ENCODE measurements at regions of chr1 and their contacts with region 1.

Region 1: GRCh38 chr1:160085686-160086455 is 4.5 kb downstream of the KCNJ9 start:
- DNase-seq: peak; percentile 82
- H3K4me3 Mint-ChIP-seq: no peak overlapping the region
- H3K27ac Mint-ChIP-seq: no peak overlapping the region
- H3K4me1 Mint-ChIP-seq: peaks cover 5% of the 10 kb centered on the region
- H3K27me3 Mint-ChIP-seq: peaks cover 24% of the 10 kb centered on the region
- CTCF ChIP-seq: peak; percentile 96

Region 2: DNA sequence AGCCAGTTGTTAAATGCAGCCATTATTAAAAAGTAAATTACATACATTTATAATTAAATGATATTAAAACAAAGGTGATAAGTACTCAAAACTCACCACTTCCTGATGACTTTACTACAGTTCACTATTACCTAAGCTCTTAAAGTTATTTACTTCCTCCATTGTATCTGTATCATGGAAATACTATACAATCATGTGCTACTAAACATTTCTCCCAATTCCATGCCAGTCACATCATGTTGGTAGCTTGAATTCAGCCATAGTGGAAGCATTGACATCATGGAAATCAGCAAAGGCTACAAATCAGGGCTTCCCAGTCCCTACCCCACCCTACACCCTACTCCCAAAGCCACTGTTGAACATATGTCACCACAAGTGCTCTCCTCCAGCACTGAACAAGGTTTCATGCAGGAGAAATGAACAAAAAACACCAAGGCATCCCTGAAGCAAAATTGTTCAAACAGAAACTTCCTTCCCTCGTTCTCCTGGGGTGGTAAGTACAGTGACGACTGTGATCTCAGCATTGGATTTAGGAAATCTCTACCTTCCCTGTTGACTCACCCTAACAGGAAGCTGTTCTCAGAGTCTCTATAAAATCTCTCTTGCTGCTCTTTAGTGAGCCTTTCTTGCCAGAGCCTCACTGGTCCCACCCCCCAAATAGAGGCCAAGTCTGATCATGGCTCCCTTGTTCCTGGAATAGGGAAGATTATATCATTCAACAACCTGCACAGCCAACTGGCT is 236.1 kb before region 1 on chr1:
- CTCF ChIA-PET with region 1: no interaction called
- POLR2A ChIA-PET with region 1: no interaction called
- intact Hi-C with region 1: no loop called
- DNase-seq: peak; percentile 75
- H3K4me3 Mint-ChIP-seq: peak overlapping the region; percentile 49
- H3K27ac Mint-ChIP-seq: peak overlapping the region; percentile 74
- H3K4me1 Mint-ChIP-seq: peaks cover 41% of the 10 kb centered on the region
- H3K27me3 Mint-ChIP-seq: no peaks in the 10 kb centered on the region
- CTCF ChIP-seq: no peak

Region 3: DNA sequence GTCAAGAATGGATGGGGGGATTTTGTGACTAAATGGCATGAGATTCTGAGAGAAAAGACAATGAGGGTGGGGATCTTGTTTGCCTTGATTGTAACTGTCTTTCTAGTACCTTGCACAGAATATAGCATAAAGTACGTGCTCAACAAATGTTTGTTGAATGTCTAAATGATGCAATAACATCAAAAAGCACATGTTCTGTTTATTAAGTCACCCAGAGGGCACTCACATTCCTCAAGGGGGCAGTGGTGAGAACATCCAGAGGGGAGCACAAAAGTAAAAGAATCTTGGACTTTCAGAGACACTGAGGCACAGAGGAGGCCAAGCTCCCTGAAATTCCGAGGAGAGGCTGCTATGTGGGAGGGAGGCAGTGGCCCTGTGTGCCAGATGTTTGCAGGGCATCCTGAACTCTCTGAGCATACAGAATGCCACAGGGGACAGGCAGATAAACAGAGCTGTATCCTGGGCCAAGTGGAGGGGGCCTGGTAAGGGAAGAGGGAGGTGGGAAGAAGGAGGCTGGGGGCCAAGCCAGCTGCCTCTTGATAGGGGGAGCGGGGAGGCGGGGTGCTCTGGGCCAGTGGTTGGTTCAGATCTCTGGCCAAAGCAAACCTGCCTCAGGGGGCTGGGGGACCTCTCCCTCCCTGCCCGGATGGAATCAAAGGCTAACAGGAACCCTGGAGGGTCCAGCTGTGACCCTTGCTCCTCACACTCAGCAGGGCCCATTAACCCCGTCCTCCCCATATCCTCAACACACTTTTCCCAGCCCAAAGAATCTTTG is 23.2 kb after region 1 on chr1:
- CTCF ChIA-PET with region 1: interaction called, 62 read pairs
- POLR2A ChIA-PET with region 1: no interaction called
- intact Hi-C with region 1: no loop called
- DNase-seq: peak; percentile 88
- H3K4me3 Mint-ChIP-seq: no peak overlapping the region
- H3K27ac Mint-ChIP-seq: no peak overlapping the region
- H3K4me1 Mint-ChIP-seq: peaks cover 12% of the 10 kb centered on the region
- H3K27me3 Mint-ChIP-seq: no peaks in the 10 kb centered on the region
- CTCF ChIP-seq: peak; percentile 52

Region 4: DNA sequence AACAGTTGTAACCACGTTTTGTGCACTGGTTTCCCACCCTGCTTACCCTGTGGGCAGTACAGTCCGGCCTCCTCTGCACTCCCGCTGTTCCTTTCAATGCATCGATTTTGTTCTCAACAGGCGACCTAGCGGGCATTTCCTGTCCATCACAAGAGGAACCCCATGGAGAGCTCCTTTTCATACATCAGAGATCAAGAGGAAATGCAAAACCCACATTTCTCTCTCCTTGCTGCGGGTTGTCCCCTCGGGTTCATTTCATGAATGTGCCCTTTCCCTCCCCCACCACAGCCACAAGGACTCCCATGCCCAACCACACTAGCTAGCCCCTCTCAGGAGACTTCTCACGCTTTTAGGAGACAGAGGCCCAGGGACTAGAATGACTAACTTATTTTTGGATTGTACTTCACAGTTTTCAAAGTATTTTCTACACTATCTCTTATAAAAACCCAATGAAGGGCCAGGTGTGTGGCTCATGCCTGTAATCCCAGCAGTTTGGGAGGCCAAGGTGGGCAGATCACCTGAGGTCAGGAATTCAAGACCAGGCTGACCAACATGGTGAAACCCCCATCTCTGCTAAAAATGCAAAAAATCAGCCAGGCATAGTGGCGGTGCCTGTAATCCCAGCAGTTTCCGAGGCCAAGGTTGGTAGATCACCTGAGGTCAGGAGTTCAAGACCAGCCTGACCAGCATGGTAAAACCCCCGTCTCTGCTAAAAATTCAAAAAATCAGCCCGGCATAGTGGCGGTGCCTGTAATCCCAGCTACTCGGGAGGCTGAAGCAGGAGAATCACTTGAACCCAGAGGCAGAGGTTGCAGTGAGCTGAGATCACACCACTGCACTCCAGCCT is 83.9 kb after region 1 on chr1:
- CTCF ChIA-PET with region 1: interaction called, 10 read pairs
- POLR2A ChIA-PET with region 1: no interaction called
- intact Hi-C with region 1: no loop called
- DNase-seq: no peak
- H3K4me3 Mint-ChIP-seq: no peak overlapping the region
- H3K27ac Mint-ChIP-seq: no peak overlapping the region
- H3K4me1 Mint-ChIP-seq: peaks cover 6% of the 10 kb centered on the region
- H3K27me3 Mint-ChIP-seq: peaks cover 49% of the 10 kb centered on the region
- CTCF ChIP-seq: no peak

Region 5: GRCh38 chr1:160219062-160219929 is 133.4 kb after region 1 on chr1:
- CTCF ChIA-PET with region 1: interaction called, 43 read pairs
- POLR2A ChIA-PET with region 1: interaction called, 3 read pairs
- intact Hi-C with region 1: no loop called
- DNase-seq: peak; percentile 61
- H3K4me3 Mint-ChIP-seq: no peak overlapping the region
- H3K27ac Mint-ChIP-seq: no peak overlapping the region
- H3K4me1 Mint-ChIP-seq: peaks cover 7% of the 10 kb centered on the region
- H3K27me3 Mint-ChIP-seq: no peaks in the 10 kb centered on the region
- CTCF ChIP-seq: peak; percentile 47

Region 6: DNA sequence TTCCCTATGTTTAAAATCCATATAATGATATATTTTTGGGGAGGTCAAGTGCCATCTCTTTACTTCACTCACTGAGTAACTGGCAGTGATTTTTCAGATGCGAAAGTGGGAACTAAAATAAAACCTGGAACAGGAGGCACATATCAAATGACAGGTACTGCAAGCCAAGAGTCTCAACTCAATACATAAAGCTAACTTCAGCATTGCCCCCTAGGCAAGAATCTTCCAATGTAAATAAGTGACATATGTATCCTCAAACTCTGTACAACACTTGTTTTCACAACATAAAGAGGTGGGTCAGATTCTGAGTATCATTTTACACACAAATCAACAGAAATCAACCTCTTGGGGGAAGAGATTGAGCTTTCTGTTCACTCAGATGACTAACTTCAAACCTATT is 158.3 kb after region 1 on chr1:
- CTCF ChIA-PET with region 1: interaction called, 18 read pairs
- POLR2A ChIA-PET with region 1: no interaction called
- intact Hi-C with region 1: no loop called
- DNase-seq: no peak
- H3K4me3 Mint-ChIP-seq: no peak overlapping the region
- H3K27ac Mint-ChIP-seq: no peak overlapping the region
- H3K4me1 Mint-ChIP-seq: peaks cover 7% of the 10 kb centered on the region
- H3K27me3 Mint-ChIP-seq: no peaks in the 10 kb centered on the region
- CTCF ChIP-seq: no peak

Region 7: DNA sequence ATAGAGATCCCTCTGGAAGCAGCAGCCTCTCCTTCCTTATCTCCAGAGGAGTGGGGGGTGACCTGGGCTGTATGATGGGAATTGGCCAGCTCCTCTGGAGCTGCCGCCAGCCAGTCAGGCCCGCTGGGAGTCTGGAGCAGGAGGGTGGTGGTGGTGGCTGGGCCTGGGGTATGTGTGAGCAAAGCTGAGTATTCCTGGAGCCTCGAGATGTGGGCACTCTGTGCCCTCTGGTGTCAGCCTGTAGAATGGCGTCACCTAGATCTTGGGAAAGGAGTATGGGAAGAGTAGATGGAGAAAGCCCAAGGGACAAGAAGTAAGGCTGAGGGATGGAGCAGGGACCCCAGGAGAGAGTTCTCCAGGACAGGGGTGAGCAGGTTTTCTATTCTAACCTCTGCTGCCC is 330.5 kb after region 1 on chr1:
- CTCF ChIA-PET with region 1: no interaction called
- POLR2A ChIA-PET with region 1: no interaction called
- intact Hi-C with region 1: loop called (anchors 1 kb)
- DNase-seq: peak; percentile 77
- H3K4me3 Mint-ChIP-seq: no peak overlapping the region
- H3K27ac Mint-ChIP-seq: no peak overlapping the region
- H3K4me1 Mint-ChIP-seq: peaks cover 12% of the 10 kb centered on the region
- H3K27me3 Mint-ChIP-seq: peaks cover 11% of the 10 kb centered on the region
- CTCF ChIP-seq: peak; percentile 83